Activated CD8-positive, alpha-beta T cell treated with anti-CD3 and anti-CD28 coated beads for 36 hours (primary cell): ENCODE measurements at regions of chr1 and their contacts with region 1.

Region 1: GRCh38 chr1:117534995-117535467 is 70.8 kb upstream of the TENT5C start:
- DNase-seq: peak; percentile 40
- ATAC-seq: peak; percentile 78
- H3K4me3 Mint-ChIP-seq: no peak overlapping the region
- H3K27ac Mint-ChIP-seq: no peak overlapping the region
- H3K4me1 Mint-ChIP-seq: peaks cover 25% of the 10 kb centered on the region
- H3K27me3 Mint-ChIP-seq: no peaks in the 10 kb centered on the region
- CTCF ChIP-seq: peak; percentile 65

Region 2: DNA sequence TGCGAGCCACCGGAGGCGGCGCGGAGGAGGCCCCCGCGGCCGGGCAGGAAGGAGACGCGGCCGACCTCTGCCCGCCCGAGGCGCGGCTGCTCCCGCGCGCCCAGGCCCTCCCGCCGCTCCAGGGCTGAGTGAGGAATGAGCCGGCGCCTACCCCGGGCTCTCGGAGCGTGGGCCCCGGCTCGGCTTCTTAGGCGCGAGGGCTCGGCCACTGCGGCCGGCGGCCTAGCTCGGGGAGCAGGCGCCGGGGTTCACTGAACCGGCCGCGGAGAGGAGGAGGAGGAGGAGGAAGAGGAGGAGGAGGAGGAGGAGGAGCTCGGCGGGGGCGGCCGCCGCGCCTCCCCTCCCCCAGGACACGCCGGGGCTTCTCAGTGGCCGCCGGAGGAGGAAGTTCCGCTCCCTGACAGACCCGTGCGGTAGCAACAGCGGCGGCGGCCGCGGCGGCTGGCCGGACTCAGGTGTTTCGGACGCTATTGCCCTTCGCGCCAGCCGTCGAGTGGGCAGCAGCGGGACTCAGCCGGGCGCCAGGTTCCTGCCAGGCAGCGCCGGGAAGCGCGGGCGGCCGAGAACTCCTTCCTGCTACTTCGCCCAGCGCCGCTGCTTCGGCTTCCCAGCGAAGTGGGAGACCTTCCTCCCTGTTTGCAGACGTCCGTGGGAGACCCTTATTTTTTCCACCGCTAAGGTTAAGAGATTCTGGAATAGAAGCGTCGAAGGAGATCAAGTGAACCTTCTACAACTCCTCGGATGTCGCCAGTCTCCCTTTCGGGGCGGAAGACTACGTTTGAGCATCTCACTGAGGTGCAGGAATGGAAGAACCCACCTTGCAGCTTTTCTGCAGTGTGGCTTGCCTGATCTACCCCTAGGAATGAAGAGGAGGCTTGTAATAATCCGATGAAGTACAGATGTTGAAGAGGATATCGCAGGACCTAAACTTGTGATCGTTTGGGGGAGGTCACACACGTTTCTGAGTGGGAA is 167.7 kb before region 1 on chr1 and contains the start of gene MAN1A2:
- CTCF ChIA-PET with region 1: interaction called, 14 read pairs
- POLR2A ChIA-PET with region 1: no interaction called
- intact Hi-C with region 1: no loop called
- DNase-seq: peak; percentile 75
- ATAC-seq: peak; percentile 65
- H3K4me3 Mint-ChIP-seq: peak within 1 kb of the TSS; percentile 90
- H3K27ac Mint-ChIP-seq: peak within 1 kb of the TSS; percentile 98
- H3K4me1 Mint-ChIP-seq: peaks cover 45% of the 10 kb centered on the region
- H3K27me3 Mint-ChIP-seq: no peaks in the 10 kb centered on the region
- CTCF ChIP-seq: no peak
- total RNA-seq, gene MAN1A2: 18.3 to 21.1 TPM

Region 3: DNA sequence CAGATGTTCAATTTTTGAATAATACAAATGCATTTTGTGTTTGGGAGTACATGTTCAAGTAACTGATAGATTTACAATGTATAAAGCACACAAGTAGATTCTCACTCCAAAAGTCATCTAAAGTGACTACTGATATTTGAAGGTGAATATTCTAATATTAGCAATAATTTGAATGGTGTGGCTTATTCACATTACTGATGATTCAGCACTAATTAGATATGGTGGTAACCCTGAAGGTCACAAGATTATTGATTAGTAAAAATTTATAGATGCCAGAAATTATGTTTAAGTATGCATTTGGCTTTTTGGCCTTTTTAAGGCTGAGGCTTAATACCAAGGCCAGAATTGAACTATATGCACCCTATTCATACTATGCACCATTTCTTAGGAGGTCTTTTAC is 18.4 kb after region 1 on chr1:
- CTCF ChIA-PET with region 1: interaction called, 25 read pairs
- POLR2A ChIA-PET with region 1: no interaction called
- intact Hi-C with region 1: no loop called
- DNase-seq: no peak
- ATAC-seq: no peak
- H3K4me3 Mint-ChIP-seq: no peak overlapping the region
- H3K27ac Mint-ChIP-seq: no peak overlapping the region
- H3K4me1 Mint-ChIP-seq: no peaks in the 10 kb centered on the region
- H3K27me3 Mint-ChIP-seq: peaks cover 3% of the 10 kb centered on the region
- CTCF ChIP-seq: no peak

Region 4: DNA sequence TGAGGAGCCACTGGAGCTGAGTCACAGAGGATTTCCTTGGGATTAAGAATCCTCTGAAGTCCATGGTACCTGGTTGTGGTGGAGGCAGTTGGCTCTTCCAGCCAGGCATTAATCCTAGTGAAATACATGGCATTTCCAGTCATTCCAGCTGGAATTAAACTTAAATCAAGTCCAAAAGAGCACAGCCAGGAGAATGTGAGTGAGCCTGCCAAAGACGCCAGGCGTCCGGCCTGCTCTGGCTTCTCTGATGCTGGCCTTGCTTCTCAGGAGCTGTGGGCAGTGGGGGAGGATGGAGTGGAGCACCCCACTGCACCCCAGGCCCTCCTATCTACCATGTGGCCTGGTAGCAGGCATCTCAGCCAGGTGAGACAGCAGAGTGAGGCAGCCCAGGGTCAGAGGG is 47.4 kb after region 1 on chr1:
- CTCF ChIA-PET with region 1: interaction called, 10 read pairs
- POLR2A ChIA-PET with region 1: no interaction called
- intact Hi-C with region 1: no loop called
- DNase-seq: no peak
- ATAC-seq: no peak
- H3K4me3 Mint-ChIP-seq: no peak overlapping the region
- H3K27ac Mint-ChIP-seq: no peak overlapping the region
- H3K4me1 Mint-ChIP-seq: no peaks in the 10 kb centered on the region
- H3K27me3 Mint-ChIP-seq: no peaks in the 10 kb centered on the region
- CTCF ChIP-seq: no peak

Region 5: DNA sequence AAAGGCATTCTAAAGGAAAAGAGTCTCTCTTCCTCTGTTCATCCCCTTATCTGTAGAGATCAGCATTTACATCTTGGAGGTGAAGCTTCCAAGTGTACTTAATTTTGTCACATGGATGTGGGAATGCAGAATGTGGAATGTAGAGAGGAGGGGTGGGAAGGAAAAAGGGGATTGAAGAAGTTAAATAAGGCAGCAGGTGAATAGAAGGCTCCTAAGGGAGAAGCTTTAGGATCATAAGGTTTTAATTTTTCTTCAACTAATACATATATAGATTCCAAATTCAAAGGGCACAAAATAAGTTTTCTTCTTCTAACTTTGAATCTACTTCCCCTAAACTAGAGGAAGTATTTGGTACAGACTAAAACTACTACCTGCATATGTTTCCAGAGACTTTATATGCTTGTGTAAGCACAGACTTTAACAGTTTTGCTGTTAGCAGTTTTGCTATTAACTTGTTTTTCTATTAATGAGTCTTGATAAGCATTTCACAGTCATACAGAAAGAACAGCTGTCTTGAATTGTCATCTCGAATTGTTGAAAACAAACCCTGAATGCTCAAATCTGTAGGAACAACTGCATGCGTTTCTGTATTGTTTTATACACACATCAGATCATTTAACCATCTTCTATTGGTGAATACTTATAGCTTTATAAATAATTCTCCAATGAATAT is 83.6 kb after region 1 on chr1:
- CTCF ChIA-PET with region 1: interaction called, 17 read pairs
- POLR2A ChIA-PET with region 1: interaction called, 3 read pairs
- intact Hi-C with region 1: no loop called
- DNase-seq: no peak
- ATAC-seq: no peak
- H3K4me3 Mint-ChIP-seq: no peak overlapping the region
- H3K27ac Mint-ChIP-seq: no peak overlapping the region
- H3K4me1 Mint-ChIP-seq: peaks cover 48% of the 10 kb centered on the region
- H3K27me3 Mint-ChIP-seq: peaks cover 17% of the 10 kb centered on the region
- CTCF ChIP-seq: no peak

Region 6: DNA sequence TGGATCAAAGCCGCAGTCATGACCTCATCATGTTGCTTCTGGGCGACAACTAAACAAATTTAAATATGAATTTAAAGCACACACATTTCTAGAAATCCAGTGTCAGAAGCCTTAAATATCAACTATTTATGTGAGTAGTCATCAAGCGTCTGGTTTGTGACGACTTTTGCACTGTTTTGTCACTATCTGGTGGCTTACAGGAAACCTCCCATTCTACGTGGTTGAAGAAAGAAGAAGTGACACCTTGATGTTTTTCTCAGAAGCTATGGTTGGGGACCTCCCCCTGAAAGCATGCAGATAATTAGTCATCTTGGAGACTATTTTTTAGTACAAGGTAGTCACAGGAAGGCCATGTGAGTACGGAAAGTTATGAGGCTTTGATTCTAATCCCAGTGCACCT is 129.3 kb after region 1 on chr1:
- CTCF ChIA-PET with region 1: interaction called, 36 read pairs
- POLR2A ChIA-PET with region 1: interaction called, 3 read pairs
- intact Hi-C with region 1: loop called (anchors 5 kb)
- DNase-seq: peak; percentile 84
- ATAC-seq: peak; percentile 90
- H3K4me3 Mint-ChIP-seq: no peak overlapping the region
- H3K27ac Mint-ChIP-seq: peak overlapping the region; percentile 77
- H3K4me1 Mint-ChIP-seq: peaks cover 64% of the 10 kb centered on the region
- H3K27me3 Mint-ChIP-seq: peaks cover 17% of the 10 kb centered on the region
- CTCF ChIP-seq: no peak

Region 7: DNA sequence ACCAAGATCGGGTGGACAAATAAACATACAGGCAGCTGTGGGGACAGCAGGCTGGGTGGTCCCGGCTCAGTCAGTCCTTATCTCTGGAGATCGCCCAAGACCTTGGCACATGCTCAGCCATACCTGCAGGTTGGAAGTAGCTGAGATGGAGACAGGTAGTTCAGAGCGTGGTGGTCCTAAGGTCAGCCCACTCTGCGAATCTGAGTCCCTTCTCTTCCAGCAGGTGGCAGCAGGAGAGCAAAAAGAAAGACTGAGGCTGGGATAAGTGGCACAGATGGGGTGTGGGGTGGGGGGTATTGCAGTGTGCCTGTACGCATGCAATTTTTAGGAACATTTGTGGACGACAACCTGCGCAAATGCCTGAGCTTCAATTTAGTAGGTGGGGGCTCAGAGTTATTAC is 175.7 kb after region 1 on chr1:
- CTCF ChIA-PET with region 1: interaction called, 13 read pairs
- POLR2A ChIA-PET with region 1: no interaction called
- intact Hi-C with region 1: no loop called
- DNase-seq: peak; percentile 20
- ATAC-seq: no peak
- H3K4me3 Mint-ChIP-seq: no peak overlapping the region
- H3K27ac Mint-ChIP-seq: no peak overlapping the region
- H3K4me1 Mint-ChIP-seq: no peaks in the 10 kb centered on the region
- H3K27me3 Mint-ChIP-seq: peaks cover 7% of the 10 kb centered on the region
- CTCF ChIP-seq: no peak